Activated CD4-positive, alpha-beta T cell treated with anti-CD3 and anti-CD28 coated beads, Interleukin-2, amount 10 ng/mL, durations not matched to agents 24 days and 14 days (primary cell): ENCODE measurements at regions of chr3 and their contacts with region 1.

Region 1: GRCh38 chr3:189324538-189325138 is 152.9 kb downstream of the TPRG1 start:
- DNase-seq: peak; percentile 96
- H3K4me3 Mint-ChIP-seq: peak overlapping the region; percentile 84
- H3K27ac Mint-ChIP-seq: peak overlapping the region; percentile 99
- H3K4me1 Mint-ChIP-seq: peaks cover 58% of the 10 kb centered on the region
- H3K27me3 Mint-ChIP-seq: peaks cover 3% of the 10 kb centered on the region

Region 2: GRCh38 chr3:187745201-187746058 is 1579.2 kb before region 1 on chr3 and contains the start of gene BCL6:
- intact Hi-C with region 1: loop called (anchors 10 kb)
- DNase-seq: peak; percentile 97
- H3K4me3 Mint-ChIP-seq: peak within 1 kb of the TSS; percentile 98
- H3K27ac Mint-ChIP-seq: peak within 1 kb of the TSS; percentile 99
- H3K4me1 Mint-ChIP-seq: peaks cover 61% of the 10 kb centered on the region
- H3K27me3 Mint-ChIP-seq: no peaks in the 10 kb centered on the region
- total RNA-seq, gene BCL6: 41.7 and 51.7 TPM in 2 replicates

Region 3: DNA sequence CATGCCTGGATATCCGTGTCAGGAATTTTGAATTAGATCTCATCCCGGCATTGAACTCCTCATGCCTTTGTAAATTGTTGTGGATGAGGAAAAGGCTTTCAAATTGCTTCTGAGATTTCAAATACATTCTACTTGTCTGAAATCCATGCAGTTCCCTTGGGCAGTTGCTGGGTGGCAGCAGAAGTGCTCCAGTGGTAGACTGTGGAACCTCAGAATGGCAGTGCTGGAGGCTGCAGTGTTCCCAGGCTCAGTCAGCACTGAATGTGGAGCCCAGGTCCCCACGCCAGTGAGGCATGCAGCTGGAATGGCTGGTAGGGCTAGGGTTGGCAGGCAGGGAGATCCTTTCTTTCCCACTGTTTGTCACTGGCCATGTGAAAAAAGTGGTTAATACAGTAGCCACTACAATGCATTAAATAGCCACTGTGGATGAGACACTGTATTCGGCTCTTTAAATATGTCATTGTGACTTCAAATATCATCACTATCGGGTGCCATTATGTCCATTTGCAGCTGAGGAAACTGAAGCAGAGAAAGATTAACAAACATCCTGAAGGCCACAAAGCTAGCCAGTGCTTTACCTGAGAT is 54.3 kb before region 1 on chr3:
- intact Hi-C with region 1: loop called (anchors 2 kb)
- DNase-seq: peak; percentile 83
- H3K4me3 Mint-ChIP-seq: no peak overlapping the region
- H3K27ac Mint-ChIP-seq: no peak overlapping the region
- H3K4me1 Mint-ChIP-seq: peaks cover 18% of the 10 kb centered on the region
- H3K27me3 Mint-ChIP-seq: peaks cover 2% of the 10 kb centered on the region

Region 4: GRCh38 chr3:189304446-189305351 is 19.9 kb before region 1 on chr3:
- intact Hi-C with region 1: loop called (anchors 1 kb)
- DNase-seq: peak; percentile 65
- H3K4me3 Mint-ChIP-seq: peak overlapping the region; percentile 63
- H3K27ac Mint-ChIP-seq: peak overlapping the region; percentile 91
- H3K4me1 Mint-ChIP-seq: peaks cover 58% of the 10 kb centered on the region
- H3K27me3 Mint-ChIP-seq: no peaks in the 10 kb centered on the region

Region 5: GRCh38 chr3:189404797-189405484 is 80.3 kb after region 1 on chr3:
- intact Hi-C with region 1: loop called (anchors 5 kb)
- DNase-seq: no peak
- H3K4me3 Mint-ChIP-seq: no peak overlapping the region
- H3K27ac Mint-ChIP-seq: no peak overlapping the region
- H3K4me1 Mint-ChIP-seq: peaks cover 7% of the 10 kb centered on the region
- H3K27me3 Mint-ChIP-seq: peaks cover 2% of the 10 kb centered on the region

Region 6: GRCh38 chr3:189563866-189564563 is 239.4 kb after region 1 on chr3:
- intact Hi-C with region 1: loop called (anchors 1 kb)
- DNase-seq: peak; percentile 84
- H3K4me3 Mint-ChIP-seq: peak overlapping the region; percentile 3
- H3K27ac Mint-ChIP-seq: peak overlapping the region; percentile 31
- H3K4me1 Mint-ChIP-seq: peaks cover 30% of the 10 kb centered on the region
- H3K27me3 Mint-ChIP-seq: no peaks in the 10 kb centered on the region